ENCODE measurements at regions of chr11 and their contacts with region 1.

Region 1: GRCh38 chr11:101487775-101488174 is 96.0 kb downstream of the TRPC6 start:
- ATAC-seq: peak in 2 of 8 experiments; percentile 36 to 42
- H3K4me3 ChIP-seq: no peak overlapping the region
- H3K27ac ChIP-seq: no peak overlapping the region
- H3K4me1 ChIP-seq: no peaks in the 10 kb centered on the region

Region 2: GRCh38 chr11:101583251-101584128 is 95.7 kb after region 1 on chr11 and contains the start of gene TRPC6:
- in situ Hi-C with region 1: loop called in 1 of 9 experiments (anchors 25 kb)
- ATAC-seq: peak; percentile 71 to 83 (median 83)
- H3K4me3 ChIP-seq: peak within 1 kb of the TSS; percentile 36 to 49 (median 41)
- H3K27ac ChIP-seq: no peak within 1 kb of the TSS
- H3K4me1 ChIP-seq: no peaks in the 10 kb centered on the region
- total RNA-seq, gene TRPC6: 0.14 to 4.9 (median 0.49) TPM